Posterior vena cava (tissue), 2 donors: ENCODE measurements at regions of chr17 and their contacts with region 1.

Region 1: GRCh38 chr17:57597531-57598453 is 147.3 kb downstream of the CCDC182 start:
- DNase-seq: peak; percentile 83

Region 2: GRCh38 chr17:57084802-57085447 is 512.9 kb before region 1 on chr17 and contains the start of gene AKAP1:
- intact Hi-C with region 1: no loop called
- DNase-seq: peak; percentile 98
- total RNA-seq, gene AKAP1: 57.1 to 57.8 TPM

Region 3: DNA sequence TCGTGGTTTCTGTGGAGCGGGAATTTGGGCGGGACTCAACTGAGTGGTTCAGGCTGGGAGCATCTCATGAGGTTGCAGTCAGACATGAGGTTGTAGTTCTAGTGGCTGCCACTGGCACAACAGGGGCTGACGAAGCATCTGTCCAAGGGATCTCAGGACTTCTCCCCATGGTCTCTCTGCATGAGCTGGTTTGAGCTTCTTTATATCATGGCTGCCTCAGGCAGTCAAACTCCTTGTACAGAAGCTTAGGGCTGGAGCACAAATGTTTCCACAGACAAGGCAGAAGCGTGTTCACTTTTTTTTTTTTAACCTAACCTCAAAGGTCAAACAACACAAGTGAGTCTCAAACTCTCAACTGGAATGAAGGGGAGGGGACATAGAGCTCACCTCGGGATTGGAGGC is 98.1 kb before region 1 on chr17:
- intact Hi-C with region 1: loop called in 1 of 2 experiments (anchors 10 kb)
- DNase-seq: no peak

Region 4: DNA sequence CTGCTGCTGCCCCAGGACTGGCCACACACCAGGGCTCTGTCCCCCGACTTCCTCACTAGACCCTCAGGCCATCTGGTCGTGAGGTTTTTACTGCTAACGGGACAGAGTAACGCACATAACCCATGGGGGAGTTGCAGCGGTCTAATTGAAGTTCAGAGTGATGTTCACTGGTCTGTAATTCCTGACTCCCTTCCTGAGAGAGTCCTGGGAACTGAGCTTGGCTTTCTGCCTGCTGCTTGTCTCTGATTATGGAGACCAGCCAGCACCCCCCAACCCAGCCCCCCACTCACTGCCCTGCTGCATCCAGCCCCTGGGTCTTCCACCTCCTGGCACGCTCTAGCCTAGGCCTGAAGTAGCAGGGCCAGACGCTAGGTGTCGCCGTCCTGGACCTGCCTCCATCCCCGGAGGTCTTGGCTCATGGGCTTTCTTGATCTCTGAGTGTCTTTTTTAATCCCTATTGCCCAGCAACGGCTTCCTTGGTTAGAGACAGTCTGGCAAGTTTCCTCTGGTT is 45.6 kb before region 1 on chr17:
- intact Hi-C with region 1: no loop called
- DNase-seq: no peak

Region 5: GRCh38 chr17:57724026-57724728 is 126.4 kb after region 1 on chr17:
- intact Hi-C with region 1: loop called in 1 of 2 experiments (anchors 10 kb)
- DNase-seq: no peak